Left ventricle myocardium inferior (tissue), 1 donor: ENCODE measurements at regions of chr4 and their contacts with region 1.

Region 1: GRCh38 chr4:162645381-162645780 is 481.6 kb upstream of the FSTL5 start:
- DNase-seq: no peak
- H3K4me3 ChIP-seq: no peak overlapping the region
- H3K27ac ChIP-seq: no peak overlapping the region
- H3K4me1 ChIP-seq: no peaks in the 10 kb centered on the region
- H3K27me3 ChIP-seq: no peaks in the 10 kb centered on the region
- CTCF ChIP-seq: peak; percentile 62

Region 2: DNA sequence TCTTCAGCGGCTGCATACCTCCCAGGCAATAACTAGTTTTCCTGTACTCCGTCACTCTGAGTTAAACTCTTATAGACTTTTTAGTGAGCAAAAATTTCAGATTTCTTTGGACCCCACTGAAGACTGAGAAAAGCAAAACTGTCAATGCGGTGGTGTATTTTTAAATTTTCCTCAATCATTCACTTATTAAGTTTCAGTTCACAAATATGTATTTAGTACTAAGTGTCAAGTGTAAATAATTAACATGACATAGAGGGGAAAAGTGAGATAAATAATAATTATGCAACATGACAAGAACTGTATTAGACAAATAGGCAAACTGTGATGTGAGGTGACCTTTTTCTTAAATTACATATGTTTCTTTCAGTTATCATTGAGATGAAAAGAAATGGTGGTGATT is 396.9 kb after region 1 on chr4:
- intact Hi-C with region 1: loop called (anchors 10 kb)
- DNase-seq: no peak
- H3K4me3 ChIP-seq: no peak overlapping the region
- H3K27ac ChIP-seq: no peak overlapping the region
- H3K4me1 ChIP-seq: no peaks in the 10 kb centered on the region
- H3K27me3 ChIP-seq: no peaks in the 10 kb centered on the region
- CTCF ChIP-seq: no peak